ENCODE measurements at regions of chr10 and their contacts with region 1.

Region 1: GRCh38 chr10:6580279-6581029 is 378 bp upstream of the PRKCQ start:
- DNase-seq: peak; percentile 93
- ATAC-seq: peak; percentile 72
- H3K4me3 Mint-ChIP-seq: peak overlapping the region; percentile 89
- H3K27ac Mint-ChIP-seq: peak overlapping the region; percentile 97
- H3K4me1 Mint-ChIP-seq: peaks cover 59% of the 10 kb centered on the region
- H3K27me3 Mint-ChIP-seq: no peaks in the 10 kb centered on the region

Region 2: GRCh38 chr10:6269953-6270867 is 310.2 kb before region 1 on chr10:
- CTCF ChIA-PET with region 1: no interaction called
- POLR2A ChIA-PET with region 1: no interaction called
- intact Hi-C with region 1: loop called (anchors 5 to 10 kb)
- DNase-seq: peak; percentile 90
- ATAC-seq: peak; percentile 72
- H3K4me3 Mint-ChIP-seq: peak overlapping the region; percentile 25
- H3K27ac Mint-ChIP-seq: peak overlapping the region; percentile 92
- H3K4me1 Mint-ChIP-seq: peaks cover 73% of the 10 kb centered on the region
- H3K27me3 Mint-ChIP-seq: no peaks in the 10 kb centered on the region

Region 3: GRCh38 chr10:6473901-6474370 is 106.5 kb before region 1 on chr10:
- CTCF ChIA-PET with region 1: interaction called, 18 read pairs
- POLR2A ChIA-PET with region 1: no interaction called
- intact Hi-C with region 1: loop called (anchors 1 to 2 kb)
- DNase-seq: peak; percentile 53
- ATAC-seq: peak; percentile 82
- H3K4me3 Mint-ChIP-seq: peak overlapping the region; percentile 72
- H3K27ac Mint-ChIP-seq: peak overlapping the region; percentile 99
- H3K4me1 Mint-ChIP-seq: peaks cover 59% of the 10 kb centered on the region
- H3K27me3 Mint-ChIP-seq: no peaks in the 10 kb centered on the region

Region 4: GRCh38 chr10:6542999-6543430 is 37.4 kb before region 1 on chr10:
- CTCF ChIA-PET with region 1: interaction called, 5 read pairs
- POLR2A ChIA-PET with region 1: interaction called, 3 read pairs
- intact Hi-C with region 1: loop called (anchors 1 kb)
- DNase-seq: peak; percentile 58
- ATAC-seq: peak; percentile 62
- H3K4me3 Mint-ChIP-seq: peak overlapping the region; percentile 75
- H3K27ac Mint-ChIP-seq: peak overlapping the region; percentile 96
- H3K4me1 Mint-ChIP-seq: peaks cover 76% of the 10 kb centered on the region
- H3K27me3 Mint-ChIP-seq: no peaks in the 10 kb centered on the region

Region 5: GRCh38 chr10:6607778-6608177 is 27.3 kb after region 1 on chr10:
- CTCF ChIA-PET with region 1: interaction called, 16 read pairs
- POLR2A ChIA-PET with region 1: interaction called, 7 read pairs
- intact Hi-C with region 1: loop called in 1 of 2 experiments (anchors 1 kb)
- DNase-seq: no peak
- ATAC-seq: no peak
- H3K4me3 Mint-ChIP-seq: no peak overlapping the region
- H3K27ac Mint-ChIP-seq: peak overlapping the region; percentile 89
- H3K4me1 Mint-ChIP-seq: peaks cover 65% of the 10 kb centered on the region
- H3K27me3 Mint-ChIP-seq: no peaks in the 10 kb centered on the region

Region 6: GRCh38 chr10:7184660-7185366 is 604.4 kb after region 1 on chr10:
- CTCF ChIA-PET with region 1: no interaction called
- POLR2A ChIA-PET with region 1: no interaction called
- intact Hi-C with region 1: loop called in 1 of 2 experiments (anchors 10 kb)
- DNase-seq: no peak
- ATAC-seq: peak; percentile 6
- H3K4me3 Mint-ChIP-seq: peak overlapping the region; percentile 2
- H3K27ac Mint-ChIP-seq: peak overlapping the region; percentile 89
- H3K4me1 Mint-ChIP-seq: peaks cover 69% of the 10 kb centered on the region
- H3K27me3 Mint-ChIP-seq: no peaks in the 10 kb centered on the region

Measured in activated CD4-positive, alpha-beta T cell treated with anti-CD3 and anti-CD28 coated beads for 36 hours (primary cell).